Natural killer cell (primary cell): ENCODE measurements at regions of chr2 and their contacts with region 1.

Region 1: GRCh38 chr2:231514103-231514950 is 15.9 kb downstream of the NMUR1 start:
- DNase-seq: peak; percentile 97 to 99
- ATAC-seq: peak; percentile 96 to 99 (median 96)
- H3K4me3 ChIP-seq: peak overlapping the region; percentile 78
- H3K4me3 Mint-ChIP-seq: peak overlapping the region; percentile 91
- H3K27ac ChIP-seq: peak overlapping the region; percentile 98
- H3K27ac Mint-ChIP-seq: peak overlapping the region; percentile 98 to 99
- H3K4me1 ChIP-seq: peaks cover 10% of the 10 kb centered on the region
- H3K4me1 Mint-ChIP-seq: peaks cover 16 to 19% of the 10 kb centered on the region in 2 donors
- H3K27me3 ChIP-seq: no peaks in the 10 kb centered on the region
- H3K27me3 Mint-ChIP-seq: no peaks in the 10 kb centered on the region
- CTCF ChIP-seq: no peak

Region 2: DNA sequence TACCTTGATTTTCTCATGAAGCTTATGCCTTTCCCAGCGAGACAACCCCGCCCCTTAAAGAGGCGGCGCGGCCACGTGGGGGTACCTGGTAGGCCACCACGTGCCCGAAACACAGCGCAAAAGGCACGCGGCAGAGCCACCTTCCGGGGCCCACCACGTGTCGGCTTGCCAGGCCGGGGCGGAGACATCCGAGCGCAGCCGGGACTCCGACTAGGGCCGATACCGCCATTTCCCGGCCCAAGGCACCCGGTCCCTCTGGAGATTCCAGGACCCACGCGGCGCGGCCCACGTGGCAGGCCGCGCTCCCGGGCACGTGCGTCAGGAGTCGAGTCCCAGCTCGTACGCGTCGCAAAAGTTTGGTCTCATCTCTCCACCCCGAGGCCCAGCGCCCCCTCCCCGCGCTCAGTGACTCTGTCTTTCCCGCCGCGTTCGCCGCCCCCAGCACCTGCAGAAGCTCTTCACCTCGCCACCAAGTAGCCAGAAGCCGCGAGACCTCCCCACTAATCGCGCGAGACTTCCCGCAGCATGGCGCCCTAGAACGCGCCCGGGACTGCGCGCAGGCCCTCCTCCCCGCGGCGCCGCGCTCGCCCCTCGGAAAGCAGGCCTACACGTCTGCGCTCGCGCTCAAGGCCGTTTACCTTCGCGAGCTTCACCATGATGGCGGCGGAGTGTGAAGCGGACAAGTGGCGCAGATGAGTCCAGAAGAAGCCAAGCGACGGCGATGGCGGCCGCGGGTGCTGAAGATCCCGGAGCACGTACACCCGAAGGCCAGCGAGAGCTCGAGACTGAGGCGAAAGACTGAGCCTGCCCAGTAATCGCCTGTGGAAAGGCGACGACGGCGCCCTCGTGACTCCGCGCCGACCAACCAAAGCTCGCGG is 50.4 kb before region 1 on chr2 and contains the start of gene NCL:
- intact Hi-C with region 1: loop called (anchors 2 kb)
- DNase-seq: peak; percentile 73 to 93
- ATAC-seq: peak; percentile 61 to 74 (median 64)
- H3K4me3 ChIP-seq: peak within 1 kb of the TSS; percentile 85
- H3K4me3 Mint-ChIP-seq: peak within 1 kb of the TSS; percentile 92
- H3K27ac ChIP-seq: peak within 1 kb of the TSS; percentile 98
- H3K27ac Mint-ChIP-seq: peak within 1 kb of the TSS; percentile 99 to 100
- H3K4me1 ChIP-seq: peaks cover 26% of the 10 kb centered on the region
- H3K4me1 Mint-ChIP-seq: peaks cover 52 to 58% of the 10 kb centered on the region in 2 donors
- H3K27me3 ChIP-seq: no peaks in the 10 kb centered on the region
- H3K27me3 Mint-ChIP-seq: no peaks in the 10 kb centered on the region
- CTCF ChIP-seq: no peak
- total RNA-seq, gene NCL: 485 to 540 (median 529) TPM

Region 3: DNA sequence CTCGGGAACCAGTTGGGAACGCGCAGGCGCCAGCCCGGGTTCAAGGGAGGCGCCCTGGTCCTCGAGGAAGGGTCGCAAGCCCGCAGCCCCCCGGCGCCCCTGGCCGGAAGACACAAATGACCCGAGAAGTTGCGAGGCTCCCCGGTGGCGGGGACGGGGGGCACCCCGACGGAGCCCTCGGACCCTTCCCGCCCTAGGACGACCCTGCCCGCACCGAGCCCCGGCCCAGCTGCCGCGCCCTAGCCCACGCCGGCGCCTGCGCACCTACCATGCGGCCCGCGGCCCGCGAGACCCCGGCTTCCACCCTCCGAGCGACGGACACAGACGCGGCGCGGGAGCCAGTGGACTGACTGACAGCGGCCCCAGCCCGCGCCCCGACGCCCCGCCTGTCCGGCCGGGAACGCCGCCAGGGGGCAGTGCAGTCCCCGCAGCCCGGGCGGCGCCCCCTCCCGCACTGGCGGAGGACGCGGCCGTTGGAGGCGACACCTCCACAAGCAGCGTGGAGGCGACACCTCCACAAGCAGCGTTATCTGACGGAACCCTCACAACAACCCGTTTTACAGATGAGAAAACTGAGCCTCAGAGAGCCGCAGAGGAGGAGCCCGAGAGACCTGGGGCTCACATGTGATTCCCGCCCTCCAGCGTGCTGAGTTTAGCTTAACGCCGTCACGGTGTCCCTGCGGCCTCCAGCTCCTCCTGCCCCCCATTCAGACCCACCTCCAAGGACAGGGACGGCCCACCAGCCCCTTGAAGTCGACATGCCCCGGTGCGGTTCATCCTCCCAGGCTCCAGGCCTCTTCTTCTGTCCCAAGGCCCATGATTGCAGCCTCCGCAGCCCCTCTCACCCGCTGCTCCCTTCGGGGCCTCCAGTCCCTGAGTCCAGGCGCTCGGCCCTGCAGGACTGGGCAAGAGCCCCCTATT is 16.0 kb after region 1 on chr2 and contains the start of gene NMUR1:
- intact Hi-C with region 1: loop called (anchors 2 kb)
- DNase-seq: peak; percentile 89 to 91
- ATAC-seq: peak; percentile 83 to 92 (median 83)
- H3K4me3 ChIP-seq: peak within 1 kb of the TSS; percentile 61
- H3K4me3 Mint-ChIP-seq: peak within 1 kb of the TSS; percentile 95
- H3K27ac ChIP-seq: peak within 1 kb of the TSS; percentile 81
- H3K27ac Mint-ChIP-seq: peak within 1 kb of the TSS; percentile 93 to 96
- H3K4me1 ChIP-seq: peaks cover 66% of the 10 kb centered on the region
- H3K4me1 Mint-ChIP-seq: peaks cover 73 to 81% of the 10 kb centered on the region in 2 donors
- H3K27me3 ChIP-seq: no peaks in the 10 kb centered on the region
- H3K27me3 Mint-ChIP-seq: no peaks in the 10 kb centered on the region
- CTCF ChIP-seq: peak; percentile 95
- total RNA-seq, gene NMUR1: 67.4 to 103 (median 80.2) TPM

Region 4: GRCh38 chr2:231590619-231591018 is 76.3 kb after region 1 on chr2:
- intact Hi-C with region 1: no loop called
- DNase-seq: no peak
- ATAC-seq: no peak
- H3K4me3 ChIP-seq: no peak overlapping the region
- H3K4me3 Mint-ChIP-seq: no peak overlapping the region
- H3K27ac ChIP-seq: no peak overlapping the region
- H3K27ac Mint-ChIP-seq: no peak overlapping the region
- H3K4me1 ChIP-seq: no peaks in the 10 kb centered on the region
- H3K4me1 Mint-ChIP-seq: no peaks in the 10 kb centered on the region
- H3K27me3 ChIP-seq: no peaks in the 10 kb centered on the region
- H3K27me3 Mint-ChIP-seq: no peaks in the 10 kb centered on the region
- CTCF ChIP-seq: no peak

Region 5: GRCh38 chr2:231604685-231605606 is 90.6 kb after region 1 on chr2:
- intact Hi-C with region 1: loop called (anchors 1 kb)
- DNase-seq: peak; percentile 99
- ATAC-seq: peak; percentile 78 to 90 (median 85)
- H3K4me3 ChIP-seq: peak overlapping the region; percentile 29
- H3K4me3 Mint-ChIP-seq: peak overlapping the region; percentile 68
- H3K27ac ChIP-seq: peak overlapping the region; percentile 82
- H3K27ac Mint-ChIP-seq: peak overlapping the region; percentile 79 to 93
- H3K4me1 ChIP-seq: peaks cover 17% of the 10 kb centered on the region
- H3K4me1 Mint-ChIP-seq: peaks cover 6 to 18% of the 10 kb centered on the region in 2 donors
- H3K27me3 ChIP-seq: no peaks in the 10 kb centered on the region
- H3K27me3 Mint-ChIP-seq: peaks cover 0 to 2% of the 10 kb centered on the region in 2 donors
- CTCF ChIP-seq: no peak

Region 6: GRCh38 chr2:231706731-231707624 is 192.7 kb after region 1 on chr2:
- intact Hi-C with region 1: loop called (anchors 5 kb)
- DNase-seq: peak; percentile 97 to 98
- ATAC-seq: peak; percentile 37 to 64 (median 50)
- H3K4me3 ChIP-seq: peak overlapping the region; percentile 85
- H3K4me3 Mint-ChIP-seq: peak overlapping the region; percentile 98
- H3K27ac ChIP-seq: peak overlapping the region; percentile 95
- H3K27ac Mint-ChIP-seq: peak overlapping the region; percentile 97 to 100
- H3K4me1 ChIP-seq: peaks cover 34% of the 10 kb centered on the region
- H3K4me1 Mint-ChIP-seq: peaks cover 24 to 37% of the 10 kb centered on the region in 2 donors
- H3K27me3 ChIP-seq: no peaks in the 10 kb centered on the region
- H3K27me3 Mint-ChIP-seq: peaks cover 0 to 6% of the 10 kb centered on the region in 2 donors
- CTCF ChIP-seq: peak; percentile 92